Gastrocnemius medialis (tissue), 4 donors: ENCODE measurements at regions of chr9 and their contacts with region 1.

Region 1: DNA sequence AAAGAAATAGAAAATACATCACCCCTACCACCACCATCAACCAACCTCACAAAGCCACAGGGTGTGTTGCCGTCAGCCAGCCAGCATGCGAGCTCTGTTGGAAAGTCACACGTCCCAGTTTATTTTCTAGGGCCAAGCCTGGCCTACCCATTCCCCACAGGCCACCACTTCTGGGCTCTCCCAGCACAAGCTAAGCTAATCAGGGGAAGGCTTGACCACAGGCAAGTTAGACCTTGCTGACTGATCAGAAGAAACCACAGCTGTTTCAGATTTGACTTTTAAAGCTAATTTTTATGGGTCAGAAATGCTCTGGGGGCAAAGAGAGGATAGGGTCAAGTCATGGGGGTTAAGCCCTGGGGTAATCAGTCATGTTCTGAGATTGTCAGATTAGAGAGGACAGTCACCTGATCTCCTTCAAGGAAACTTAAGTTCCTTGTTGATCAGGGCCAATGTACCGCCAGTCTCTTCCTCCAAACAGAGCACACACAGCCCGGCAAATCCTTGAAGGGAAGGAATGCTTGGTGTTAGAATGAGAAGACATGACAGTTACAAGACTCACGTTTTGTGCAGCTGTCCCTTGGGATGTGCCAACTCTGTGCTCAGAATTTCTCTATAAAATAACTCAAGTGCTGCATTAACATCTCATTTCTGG is 7.6 kb downstream of the SHB start:
- DNase-seq: no peak
- ATAC-seq: no peak
- H3K4me3 ChIP-seq: no peak overlapping the region
- H3K27ac ChIP-seq: peak overlapping the region in 1 of 4 donors; percentile 59
- H3K4me1 ChIP-seq: peaks cover 27 to 52% of the 10 kb centered on the region in 2 donors
- H3K27me3 ChIP-seq: no peaks in the 10 kb centered on the region
- CTCF ChIP-seq: no peak
- POLR2A ChIP-seq: no peak

Region 2: GRCh38 chr9:37953775-37954437 is 107.5 kb before region 1 on chr9:
- in situ Hi-C with region 1: no loop called
- intact Hi-C with region 1: no loop called
- DNase-seq: peak in 1 of 2 donors; percentile 35
- ATAC-seq: peak; percentile 54 to 71
- H3K4me3 ChIP-seq: no peak overlapping the region
- H3K27ac ChIP-seq: peak overlapping the region in 2 of 4 donors; percentile 31 to 71
- H3K4me1 ChIP-seq: peaks cover 0 to 6% of the 10 kb centered on the region in 2 donors
- H3K27me3 ChIP-seq: no peaks in the 10 kb centered on the region
- CTCF ChIP-seq: no peak
- POLR2A ChIP-seq: no peak

Region 3: GRCh38 chr9:38026021-38026809 is 35.2 kb before region 1 on chr9:
- in situ Hi-C with region 1: no loop called
- intact Hi-C with region 1: loop called (anchors 5 kb)
- DNase-seq: no peak
- ATAC-seq: peak; percentile 51 to 60
- H3K4me3 ChIP-seq: no peak overlapping the region
- H3K27ac ChIP-seq: peak overlapping the region; percentile 35 to 44 (median 40)
- H3K4me1 ChIP-seq: peaks cover 28 to 43% of the 10 kb centered on the region in 2 donors
- H3K27me3 ChIP-seq: no peaks in the 10 kb centered on the region
- CTCF ChIP-seq: no peak
- POLR2A ChIP-seq: no peak

Region 4: GRCh38 chr9:38039907-38040682 is 21.4 kb before region 1 on chr9:
- in situ Hi-C with region 1: no loop called
- intact Hi-C with region 1: loop called (anchors 2 kb)
- DNase-seq: no peak
- ATAC-seq: no peak
- H3K4me3 ChIP-seq: no peak overlapping the region
- H3K27ac ChIP-seq: no peak overlapping the region
- H3K4me1 ChIP-seq: peaks cover 19 to 20% of the 10 kb centered on the region in 2 donors
- H3K27me3 ChIP-seq: no peaks in the 10 kb centered on the region
- CTCF ChIP-seq: no peak
- POLR2A ChIP-seq: no peak